ENCODE measurements at regions of chr4 and their contacts with region 1.

Region 1: DNA sequence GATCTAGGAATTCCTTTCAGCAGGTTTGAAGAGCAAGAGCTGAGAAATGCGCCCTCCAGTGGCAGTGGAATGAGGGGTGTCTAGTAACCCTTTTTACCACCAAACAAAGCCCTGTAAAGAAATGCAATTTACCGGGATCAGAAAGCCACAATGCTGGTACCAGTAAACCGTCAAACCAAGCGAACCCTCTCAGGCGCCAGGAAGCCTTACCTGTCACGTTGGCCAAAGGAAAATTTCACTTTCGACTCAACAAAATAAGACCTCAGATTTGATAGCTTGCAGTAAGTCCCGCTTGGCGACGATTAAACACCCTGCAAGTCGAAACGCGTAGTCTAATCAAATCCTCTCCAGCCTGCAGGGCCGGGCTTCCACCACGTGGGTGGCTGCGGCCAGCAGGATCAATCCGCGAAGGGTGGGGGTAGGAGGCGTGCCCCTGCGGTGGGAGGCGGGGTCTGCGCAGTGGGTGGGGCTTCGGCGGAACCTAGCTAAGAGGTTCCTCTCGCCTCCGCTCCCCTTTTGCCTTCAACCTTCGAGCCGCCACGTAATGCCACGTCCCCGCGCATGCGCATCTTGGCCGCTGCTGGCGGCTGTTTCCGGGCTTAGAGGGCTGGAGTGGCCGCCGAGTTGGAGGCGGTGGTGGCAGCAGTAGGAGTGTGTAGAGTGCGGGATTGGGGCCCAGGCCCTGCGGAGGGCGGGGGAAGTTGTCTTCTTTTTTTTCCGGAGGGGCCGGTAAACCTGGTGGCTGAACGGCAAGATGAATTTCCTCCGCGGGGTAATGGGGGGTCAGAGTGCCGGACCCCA is at the start of gene USO1:
- DNase-seq: peak; percentile 97
- ATAC-seq: peak; percentile 89
- H3K4me3 ChIP-seq: peak within 1 kb of the TSS; percentile 93
- H3K27ac ChIP-seq: peak within 1 kb of the TSS; percentile 90
- H3K4me1 ChIP-seq: peaks cover 9% of the 10 kb centered on the region
- H3K27me3 ChIP-seq: no peaks in the 10 kb centered on the region
- CTCF ChIP-seq: peak; percentile 69 to 88 (median 69)
- EP300 ChIP-seq: no peak
- POLR2A ChIP-seq: peak; percentile 93
- RAD21 ChIP-seq: peak; percentile 64
- polyA plus RNA-seq, gene USO1: 19.4 to 25.3 TPM

Region 2: GRCh38 chr4:75514131-75514948 is 209.9 kb before region 1 on chr4 and contains the starts of genes RCHY1 and THAP6:
- CTCF ChIA-PET with region 1: interaction called, 5 read pairs
- POLR2A ChIA-PET with region 1: interaction called, 22 read pairs
- RAD21 ChIA-PET with region 1: interaction called, 5 read pairs
- SMC1A ChIA-PET with region 1: interaction called, 10 read pairs
- in situ Hi-C with region 1: no loop called
- intact Hi-C with region 1: loop called (anchors 5 kb)
- DNase-seq: peak; percentile 78
- ATAC-seq: peak; percentile 91
- H3K4me3 ChIP-seq: peak within 1 kb of the TSS; percentile 98
- H3K27ac ChIP-seq: peak within 1 kb of the TSS; percentile 84
- H3K4me1 ChIP-seq: no peaks in the 10 kb centered on the region
- H3K27me3 ChIP-seq: no peaks in the 10 kb centered on the region
- CTCF ChIP-seq: no peak
- EP300 ChIP-seq: no peak; a peak in 1 of 4 replicates
- POLR2A ChIP-seq: peak; percentile 98
- RAD21 ChIP-seq: no peak
- polyA plus RNA-seq, gene RCHY1: 19.9 to 25.0 TPM
- polyA plus RNA-seq, gene THAP6: 8.9 to 9.4 TPM

Region 3: GRCh38 chr4:75653845-75654503 is 70.3 kb before region 1 on chr4:
- CTCF ChIA-PET with region 1: interaction called, 7 read pairs
- POLR2A ChIA-PET with region 1: interaction called, 3 read pairs
- RAD21 ChIA-PET with region 1: interaction called, 8 read pairs
- SMC1A ChIA-PET with region 1: interaction called, 17 read pairs
- in situ Hi-C with region 1: no loop called
- intact Hi-C with region 1: no loop called
- DNase-seq: no peak
- ATAC-seq: peak; percentile 37; the same call in 1 of the 3 replicates
- H3K4me3 ChIP-seq: no peak overlapping the region
- H3K27ac ChIP-seq: no peak overlapping the region
- H3K4me1 ChIP-seq: peaks cover 7% of the 10 kb centered on the region; the same call in 1 of the 2 replicates
- H3K27me3 ChIP-seq: no peaks in the 10 kb centered on the region
- CTCF ChIP-seq: peak; percentile 17 to 41 (median 24); a peak in 2 of 6 replicates
- EP300 ChIP-seq: no peak
- POLR2A ChIP-seq: no peak
- RAD21 ChIP-seq: no peak

Region 4: DNA sequence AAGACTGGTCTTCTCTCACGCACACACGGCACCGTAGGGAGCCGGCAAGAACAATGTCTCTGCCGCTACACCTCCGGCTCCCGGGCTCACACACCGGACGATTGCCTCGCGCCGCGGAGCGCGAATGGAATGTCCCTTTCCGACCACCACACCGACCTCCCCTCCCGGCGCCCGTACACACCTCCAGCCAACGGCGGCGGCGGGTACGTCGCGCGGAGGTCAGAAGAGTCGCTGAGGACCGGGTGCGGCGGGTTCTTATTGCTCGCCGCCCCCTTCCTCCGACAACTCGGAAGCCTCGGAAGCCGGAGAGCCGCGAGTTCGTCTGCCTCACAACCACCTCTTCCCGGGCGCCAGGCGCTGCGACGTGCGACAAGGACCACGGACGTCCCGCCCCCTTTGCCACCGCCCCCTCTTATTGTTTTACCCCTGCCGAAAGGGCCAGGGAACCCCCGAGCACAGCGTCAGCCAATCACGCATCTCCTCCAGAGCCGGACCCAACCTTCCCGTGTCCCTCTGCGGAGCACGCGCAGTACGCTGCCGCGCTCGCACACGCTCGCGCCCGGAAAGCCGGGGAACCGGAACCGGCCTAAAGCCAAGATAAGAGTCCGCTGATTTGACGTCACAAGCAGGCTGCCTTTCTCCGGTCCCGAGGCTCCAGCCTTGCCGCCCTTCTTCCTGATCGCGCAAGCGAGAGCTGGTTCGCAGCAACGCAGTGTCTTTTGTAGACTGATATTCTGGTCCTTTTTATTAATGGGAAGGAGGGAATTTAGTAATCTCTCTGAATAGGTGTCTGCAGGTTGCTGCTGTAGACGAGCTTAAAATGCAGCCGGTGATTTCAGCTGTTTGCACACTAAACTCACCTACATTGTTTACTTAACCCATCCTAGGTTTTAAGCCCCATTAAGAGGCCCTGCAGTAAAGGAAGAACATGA is 51.0 kb before region 1 on chr4 and contains the start of gene G3BP2:
- CTCF ChIA-PET with region 1: interaction called, 40 read pairs
- POLR2A ChIA-PET with region 1: interaction called, 72 read pairs
- RAD21 ChIA-PET with region 1: interaction called, 28 read pairs
- SMC1A ChIA-PET with region 1: interaction called, 98 read pairs
- in situ Hi-C with region 1: no loop called
- intact Hi-C with region 1: loop called (anchors 1 kb)
- DNase-seq: peak; percentile 98
- ATAC-seq: peak; percentile 93
- H3K4me3 ChIP-seq: peak within 1 kb of the TSS; percentile 77
- H3K27ac ChIP-seq: peak within 1 kb of the TSS; percentile 92
- H3K4me1 ChIP-seq: peaks cover 5% of the 10 kb centered on the region; the same call in 1 of the 2 replicates
- H3K27me3 ChIP-seq: no peaks in the 10 kb centered on the region
- CTCF ChIP-seq: no peak
- EP300 ChIP-seq: peak in 1 of 2 experiments; percentile 9; a peak in 1 of 4 replicates
- POLR2A ChIP-seq: peak; percentile 98
- RAD21 ChIP-seq: no peak
- polyA plus RNA-seq, gene G3BP2: 22.2 to 27.9 TPM

Region 5: GRCh38 chr4:75708218-75708691 is 16.0 kb before region 1 on chr4:
- CTCF ChIA-PET with region 1: interaction called, 22 read pairs
- POLR2A ChIA-PET with region 1: interaction called, 8 read pairs
- RAD21 ChIA-PET with region 1: interaction called, 7 read pairs
- SMC1A ChIA-PET with region 1: interaction called, 13 read pairs
- in situ Hi-C with region 1: no loop called
- intact Hi-C with region 1: no loop called
- DNase-seq: no peak
- ATAC-seq: peak; percentile 96
- H3K4me3 ChIP-seq: no peak overlapping the region
- H3K27ac ChIP-seq: no peak overlapping the region
- H3K4me1 ChIP-seq: no peaks in the 10 kb centered on the region; the same call in 1 of the 2 replicates
- H3K27me3 ChIP-seq: no peaks in the 10 kb centered on the region
- CTCF ChIP-seq: peak; percentile 51 to 56 (median 56)
- EP300 ChIP-seq: no peak
- POLR2A ChIP-seq: no peak
- RAD21 ChIP-seq: peak; percentile 77